Gastrocnemius medialis (tissue), 4 donors: ENCODE measurements at regions of chr7 and their contacts with region 1.

Region 1: DNA sequence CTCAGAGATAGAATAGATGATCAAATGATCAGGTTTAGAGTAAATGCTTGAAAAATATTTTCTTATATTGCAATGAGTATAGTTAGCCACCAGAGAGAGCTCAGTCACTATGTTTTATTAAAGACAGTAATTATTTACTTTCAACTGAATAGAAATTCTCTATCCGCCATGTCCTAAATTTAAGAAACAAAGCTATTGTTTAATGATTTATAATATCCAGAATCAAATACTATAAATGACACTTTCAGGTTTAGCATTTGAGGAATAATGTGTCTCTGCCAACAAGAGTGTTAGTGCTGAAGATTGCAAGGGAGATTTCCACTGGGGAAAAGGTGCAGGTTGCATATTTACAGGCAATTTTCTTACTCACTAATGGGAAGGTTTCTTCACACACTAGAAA is 184.7 kb downstream of the DGKB start:
- DNase-seq: no peak
- ATAC-seq: peak; percentile 36 to 47
- H3K4me3 ChIP-seq: no peak overlapping the region
- H3K27ac ChIP-seq: no peak overlapping the region
- H3K4me1 ChIP-seq: peaks cover 3 to 8% of the 10 kb centered on the region in 2 donors
- H3K27me3 ChIP-seq: no peaks in the 10 kb centered on the region
- CTCF ChIP-seq: peak; percentile 45 to 69 (median 64)
- POLR2A ChIP-seq: no peak

Region 2: DNA sequence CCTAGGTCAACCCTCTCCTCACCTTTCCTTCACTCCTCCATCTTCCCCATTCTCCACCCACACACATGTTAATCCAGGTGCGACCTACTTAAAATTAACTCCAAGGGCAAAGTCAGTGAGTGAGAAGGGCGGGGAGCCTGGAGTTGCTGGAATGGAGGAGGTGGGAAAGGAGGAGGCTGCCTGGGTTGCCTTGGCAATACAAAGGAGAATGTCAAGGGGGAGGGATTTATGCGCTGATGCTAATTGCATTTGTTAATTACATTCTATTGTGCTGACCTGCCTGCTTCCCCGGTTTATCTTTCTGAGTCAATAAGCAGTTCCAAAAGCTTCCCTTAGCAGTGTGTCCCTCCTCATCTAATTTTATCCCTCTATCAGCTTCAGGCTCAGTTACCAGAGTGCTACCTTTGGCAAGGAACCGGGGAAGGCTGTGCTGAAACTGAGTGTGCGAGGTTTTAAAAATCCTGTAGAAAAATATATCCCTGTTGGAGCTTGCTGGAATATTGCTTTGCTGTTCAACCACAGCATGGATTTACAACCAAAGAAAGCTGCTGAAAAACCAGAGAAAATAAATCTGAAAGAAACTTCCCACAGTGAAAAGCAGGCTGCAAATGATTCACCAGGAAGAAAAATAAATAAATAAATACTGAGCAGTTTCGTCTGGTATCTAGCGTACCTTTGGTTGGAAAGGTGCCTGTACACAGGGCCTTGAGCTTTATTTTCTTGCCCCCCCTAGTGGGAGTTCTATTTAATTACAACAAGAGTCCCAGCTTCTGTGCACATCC is 297.9 kb after region 1 on chr7:
- in situ Hi-C with region 1: loop called (anchors 5 to 10 kb)
- intact Hi-C with region 1: loop called (anchors 1 kb)
- DNase-seq: peak; percentile 29 to 30
- ATAC-seq: peak; percentile 96 to 97
- H3K4me3 ChIP-seq: peak overlapping the region; percentile 23 to 43 (median 37)
- H3K27ac ChIP-seq: peak overlapping the region; percentile 32 to 75 (median 60)
- H3K4me1 ChIP-seq: peaks cover 10 to 19% of the 10 kb centered on the region in 2 donors
- H3K27me3 ChIP-seq: no peaks in the 10 kb centered on the region
- CTCF ChIP-seq: peak; percentile 49 to 67 (median 65)
- POLR2A ChIP-seq: no peak